ENCODE measurements at regions of chr10 and their contacts with region 1.

Region 1: GRCh38 chr10:89327784-89328441 is at the start of gene IFIT3:
- DNase-seq: peak in 1 of 2 donors; percentile 62
- ATAC-seq: peak; percentile 30 to 51 (median 36)
- H3K4me3 ChIP-seq: peak within 1 kb of the TSS; percentile 63
- H3K4me3 Mint-ChIP-seq: peak within 1 kb of the TSS; percentile 95
- H3K27ac ChIP-seq: peak within 1 kb of the TSS; percentile 74
- H3K27ac Mint-ChIP-seq: peak within 1 kb of the TSS; percentile 92 to 96
- H3K4me1 ChIP-seq: peaks cover 33% of the 10 kb centered on the region
- H3K4me1 Mint-ChIP-seq: peaks cover 43 to 46% of the 10 kb centered on the region in 2 donors
- H3K27me3 ChIP-seq: peaks cover 4% of the 10 kb centered on the region
- H3K27me3 Mint-ChIP-seq: peaks cover 11 to 17% of the 10 kb centered on the region in 2 donors
- CTCF ChIP-seq: no peak
- total RNA-seq, gene IFIT3: 12.0 to 31.7 (median 12.2) TPM

Region 2: DNA sequence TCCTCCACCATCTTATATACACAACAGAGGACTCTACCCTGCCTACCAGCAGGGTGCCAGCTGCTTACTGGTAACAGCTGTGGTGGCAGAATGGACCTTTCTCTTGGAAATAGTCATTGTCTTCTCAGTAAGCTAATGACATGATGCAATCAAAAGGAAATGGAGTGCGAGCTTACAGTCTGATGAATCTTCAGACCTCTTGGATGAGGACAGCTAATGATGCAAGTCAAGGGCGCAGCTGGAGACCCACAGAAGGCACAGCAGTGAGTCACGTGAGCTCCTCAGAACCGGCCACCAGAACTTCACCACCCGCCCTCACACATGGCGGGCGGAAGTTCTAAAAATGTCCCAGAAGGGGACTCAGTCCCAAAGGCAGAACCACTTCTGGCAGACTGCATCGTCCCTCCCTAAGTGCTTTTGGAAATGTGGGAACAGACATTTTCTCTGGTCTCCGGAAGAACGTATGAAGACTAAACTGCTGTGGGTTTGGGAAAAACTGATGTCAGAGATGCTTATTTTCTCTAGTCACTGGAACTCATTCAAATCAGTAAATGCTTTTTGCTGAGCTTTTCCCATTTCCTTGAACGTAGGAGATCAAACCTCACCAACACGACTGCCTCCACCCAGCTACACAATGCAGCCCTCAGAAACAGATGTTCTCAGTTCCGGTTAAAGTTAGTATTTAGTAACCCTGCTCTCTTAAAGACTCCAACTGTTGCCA is 241.0 kb before region 1 on chr10:
- intact Hi-C with region 1: no loop called
- DNase-seq: peak in 1 of 2 donors; percentile 6
- ATAC-seq: no peak
- H3K4me3 ChIP-seq: no peak overlapping the region
- H3K4me3 Mint-ChIP-seq: no peak overlapping the region
- H3K27ac ChIP-seq: no peak overlapping the region
- H3K27ac Mint-ChIP-seq: no peak overlapping the region
- H3K4me1 ChIP-seq: peaks cover 4% of the 10 kb centered on the region
- H3K4me1 Mint-ChIP-seq: no peaks in the 10 kb centered on the region
- H3K27me3 ChIP-seq: no peaks in the 10 kb centered on the region
- H3K27me3 Mint-ChIP-seq: no peaks in the 10 kb centered on the region
- CTCF ChIP-seq: no peak

Region 3: GRCh38 chr10:89217057-89217990 is 110.6 kb before region 1 on chr10:
- intact Hi-C with region 1: no loop called
- DNase-seq: peak; percentile 45 to 81
- ATAC-seq: peak; percentile 51 to 67 (median 63)
- H3K4me3 ChIP-seq: no peak overlapping the region
- H3K4me3 Mint-ChIP-seq: no peak overlapping the region
- H3K27ac ChIP-seq: peak overlapping the region; percentile 26
- H3K27ac Mint-ChIP-seq: peak overlapping the region in 1 of 2 donors; percentile 70
- H3K4me1 ChIP-seq: no peaks in the 10 kb centered on the region
- H3K4me1 Mint-ChIP-seq: peaks cover 10 to 14% of the 10 kb centered on the region in 2 donors
- H3K27me3 ChIP-seq: no peaks in the 10 kb centered on the region
- H3K27me3 Mint-ChIP-seq: no peaks in the 10 kb centered on the region
- CTCF ChIP-seq: peak; percentile 74

Region 4: DNA sequence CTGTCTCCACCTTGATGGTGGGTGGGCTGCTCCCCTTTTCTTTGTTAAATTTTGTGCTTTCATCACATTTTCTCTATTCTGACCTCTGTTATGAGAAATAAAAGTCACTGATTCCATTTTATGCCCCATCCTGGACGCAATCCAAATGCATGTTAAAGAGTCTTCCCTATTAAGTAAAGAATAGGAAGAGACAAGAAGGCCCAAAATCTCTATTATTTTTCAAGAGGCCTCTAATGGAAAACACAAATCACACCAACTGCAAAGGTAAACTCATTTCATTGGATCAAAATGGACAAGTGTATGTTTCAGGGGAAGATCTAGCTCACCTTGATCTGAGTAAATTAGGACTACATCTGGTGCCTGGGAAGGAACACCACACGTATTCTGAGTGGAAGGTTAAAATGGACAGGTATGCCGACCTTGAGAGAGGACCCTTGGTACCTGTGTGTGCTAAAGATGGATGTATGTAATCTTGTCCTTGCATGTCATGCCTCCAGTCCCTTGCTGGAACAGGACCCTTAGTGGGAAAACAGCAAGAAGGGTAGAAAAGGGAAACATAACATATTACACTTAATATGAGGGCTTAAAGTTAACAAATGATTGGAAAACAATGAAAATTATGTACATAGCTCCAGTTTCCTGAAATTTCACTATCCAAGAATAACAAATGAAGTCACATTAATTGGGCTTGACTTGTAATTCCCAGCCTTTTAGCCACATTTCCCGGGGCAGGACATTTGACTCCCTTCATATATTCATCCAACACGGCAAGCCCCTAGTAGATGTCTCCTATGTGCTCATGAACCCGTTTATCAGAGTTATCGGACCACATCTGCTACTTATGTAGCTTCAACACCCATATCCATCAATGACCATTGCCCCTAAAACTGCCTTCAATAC is 18.5 kb before region 1 on chr10:
- intact Hi-C with region 1: loop called (anchors 2 kb)
- DNase-seq: no peak
- ATAC-seq: no peak
- H3K4me3 ChIP-seq: no peak overlapping the region
- H3K4me3 Mint-ChIP-seq: no peak overlapping the region
- H3K27ac ChIP-seq: no peak overlapping the region
- H3K27ac Mint-ChIP-seq: no peak overlapping the region
- H3K4me1 ChIP-seq: no peaks in the 10 kb centered on the region
- H3K4me1 Mint-ChIP-seq: peaks cover 9 to 11% of the 10 kb centered on the region in 2 donors
- H3K27me3 ChIP-seq: no peaks in the 10 kb centered on the region
- H3K27me3 Mint-ChIP-seq: peaks cover 6 to 7% of the 10 kb centered on the region in 2 donors
- CTCF ChIP-seq: no peak

Measured in natural killer cell (primary cell).